ENCODE measurements at regions of chr1 and their contacts with region 1.

Region 1: GRCh38 chr1:22704440-22705067 is 6.1 kb upstream of the EPHB2 start:
- DNase-seq: peak; percentile 30
- ATAC-seq: peak; percentile 97
- H3K4me3 Mint-ChIP-seq: no peak overlapping the region
- H3K27ac Mint-ChIP-seq: no peak overlapping the region
- H3K4me1 Mint-ChIP-seq: no peaks in the 10 kb centered on the region
- H3K27me3 Mint-ChIP-seq: peaks cover 30% of the 10 kb centered on the region
- CTCF ChIP-seq: peak; percentile 33

Region 2: GRCh38 chr1:22889213-22889827 is 184.8 kb after region 1 on chr1:
- CTCF ChIA-PET with region 1: interaction called, 15 read pairs
- POLR2A ChIA-PET with region 1: no interaction called
- intact Hi-C with region 1: loop called (anchors 1 kb)
- DNase-seq: no peak
- ATAC-seq: no peak
- H3K4me3 Mint-ChIP-seq: no peak overlapping the region
- H3K27ac Mint-ChIP-seq: no peak overlapping the region
- H3K4me1 Mint-ChIP-seq: peaks cover 9% of the 10 kb centered on the region
- H3K27me3 Mint-ChIP-seq: peaks cover 13% of the 10 kb centered on the region
- CTCF ChIP-seq: no peak

Region 3: DNA sequence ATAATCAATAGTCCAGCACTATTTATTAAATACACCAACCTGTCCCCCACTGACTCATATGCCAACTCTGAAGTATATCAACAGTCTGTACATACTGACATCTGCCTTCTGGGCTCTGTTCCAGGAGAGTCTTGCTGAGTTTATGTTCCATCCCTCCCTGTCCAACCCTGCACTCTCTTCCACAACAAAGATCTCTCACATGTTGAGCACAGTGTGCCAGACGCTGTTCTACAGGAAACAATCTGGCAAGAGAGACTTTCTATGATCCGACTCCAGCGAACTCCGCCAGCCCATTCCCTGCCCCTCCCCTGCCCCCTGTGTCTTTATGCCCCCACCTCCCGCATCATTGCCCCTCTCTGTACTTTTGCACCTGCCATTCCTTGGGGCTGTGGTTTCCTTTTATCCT is 264.8 kb after region 1 on chr1:
- CTCF ChIA-PET with region 1: interaction called, 3 read pairs
- POLR2A ChIA-PET with region 1: no interaction called
- intact Hi-C with region 1: loop called (anchors 1 kb)
- DNase-seq: no peak
- ATAC-seq: no peak
- H3K4me3 Mint-ChIP-seq: no peak overlapping the region
- H3K27ac Mint-ChIP-seq: no peak overlapping the region
- H3K4me1 Mint-ChIP-seq: no peaks in the 10 kb centered on the region
- H3K27me3 Mint-ChIP-seq: peaks cover 35% of the 10 kb centered on the region
- CTCF ChIP-seq: no peak